Pancreas (tissue), 10 donors: ENCODE measurements at regions of chr12 and their contacts with region 1.

Region 1: DNA sequence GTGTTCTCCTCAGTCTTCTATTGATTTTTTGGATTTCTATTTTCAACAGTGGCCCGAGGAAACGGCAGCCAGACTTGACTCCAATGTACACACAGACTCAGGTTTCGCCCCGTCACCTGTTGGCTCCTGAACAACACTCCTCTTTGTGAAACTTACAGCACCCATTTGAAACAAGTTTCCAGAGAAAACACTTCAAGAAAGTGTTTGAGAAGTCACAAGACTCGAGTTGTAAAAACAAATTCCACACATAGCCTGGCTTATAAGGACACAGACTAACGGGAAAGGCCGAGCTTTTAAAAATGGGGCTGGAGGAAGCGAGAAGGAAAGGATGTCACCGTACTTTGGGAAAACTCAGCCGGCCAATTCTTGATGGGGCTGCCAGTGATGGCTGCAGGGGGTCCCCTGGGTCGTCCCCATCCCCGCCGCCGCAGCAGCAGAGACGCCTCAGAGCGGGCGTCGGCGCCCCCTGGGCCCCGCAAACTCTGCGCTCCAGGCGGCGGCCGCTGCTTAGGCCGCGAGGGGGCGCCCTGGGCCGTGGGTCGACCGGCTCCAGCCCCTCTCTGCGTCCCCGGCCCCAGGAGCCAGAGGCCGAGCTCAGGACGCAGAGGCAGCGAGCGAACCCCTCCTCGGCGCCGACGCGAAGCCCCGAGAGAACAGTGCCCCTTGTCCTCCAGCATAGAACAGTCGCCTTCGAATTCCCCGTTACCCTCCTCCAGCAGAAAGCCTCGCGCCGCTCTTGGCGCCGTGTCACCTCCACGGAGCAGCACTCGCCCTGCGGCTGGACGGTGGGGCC is 106.9 kb downstream of the PRICKLE1 start:
- DNase-seq: peak in 5 of 6 donors; percentile 62 to 93 (median 70)
- ATAC-seq: peak; percentile 85 to 94 (median 90)
- H3K4me3 ChIP-seq: peak overlapping the region; percentile 69 to 85 (median 83)
- H3K27ac ChIP-seq: peak overlapping the region in 3 of 4 donors; percentile 29 to 62 (median 60)
- H3K4me1 ChIP-seq: peaks cover 0 to 4% (median 3%) of the 10 kb centered on the region in 3 donors
- H3K27me3 ChIP-seq: no peaks in the 10 kb centered on the region
- CTCF ChIP-seq: peak; percentile 74 to 92 (median 88)

Region 2: GRCh38 chr12:42166501-42166900 is 316.1 kb before region 1 on chr12:
- intact Hi-C with region 1: no loop called
- DNase-seq: no peak
- ATAC-seq: no peak
- H3K4me3 ChIP-seq: no peak overlapping the region
- H3K27ac ChIP-seq: no peak overlapping the region
- H3K4me1 ChIP-seq: peaks cover 0 to 14% (median 9%) of the 10 kb centered on the region in 3 donors
- H3K27me3 ChIP-seq: no peaks in the 10 kb centered on the region
- CTCF ChIP-seq: no peak

Region 3: GRCh38 chr12:43349863-43350262 is 867.2 kb after region 1 on chr12:
- intact Hi-C with region 1: loop called in 1 of 3 experiments (anchors 10 kb)
- DNase-seq: no peak
- ATAC-seq: no peak
- H3K4me3 ChIP-seq: no peak overlapping the region
- H3K27ac ChIP-seq: no peak overlapping the region
- H3K4me1 ChIP-seq: no peaks in the 10 kb centered on the region
- H3K27me3 ChIP-seq: no peaks in the 10 kb centered on the region
- CTCF ChIP-seq: no peak